Activated T-helper 1 cell treated with anti-CD3 and anti-CD28 coated beads, Interleukin-12 subunit alpha, Interleukin-12 subunit beta, Interleukin-2, Interleukin-4 antibody, amounts not matched to agents 30 ng/mL and 10 ng/mL and 1 ng/mL, durations not matched to agents 14 hours and 24 hours and 36 hours (primary cell): ENCODE measurements at regions of chr3 and their contacts with region 1.

Region 1: GRCh38 chr3:98329392-98330124 is 24.1 kb upstream of the OR5K4 start:
- DNase-seq: peak; percentile 28
- H3K4me3 Mint-ChIP-seq: no peak overlapping the region
- H3K27ac Mint-ChIP-seq: no peak overlapping the region
- H3K4me1 Mint-ChIP-seq: peaks cover 24% of the 10 kb centered on the region
- H3K27me3 Mint-ChIP-seq: peaks cover 32% of the 10 kb centered on the region

Region 2: GRCh38 chr3:97793420-97794019 is 536.0 kb before region 1 on chr3:
- intact Hi-C with region 1: loop called (anchors 10 kb)
- DNase-seq: peak; percentile 6
- H3K4me3 Mint-ChIP-seq: no peak overlapping the region
- H3K27ac Mint-ChIP-seq: no peak overlapping the region
- H3K4me1 Mint-ChIP-seq: no peaks in the 10 kb centered on the region
- H3K27me3 Mint-ChIP-seq: no peaks in the 10 kb centered on the region

Region 3: DNA sequence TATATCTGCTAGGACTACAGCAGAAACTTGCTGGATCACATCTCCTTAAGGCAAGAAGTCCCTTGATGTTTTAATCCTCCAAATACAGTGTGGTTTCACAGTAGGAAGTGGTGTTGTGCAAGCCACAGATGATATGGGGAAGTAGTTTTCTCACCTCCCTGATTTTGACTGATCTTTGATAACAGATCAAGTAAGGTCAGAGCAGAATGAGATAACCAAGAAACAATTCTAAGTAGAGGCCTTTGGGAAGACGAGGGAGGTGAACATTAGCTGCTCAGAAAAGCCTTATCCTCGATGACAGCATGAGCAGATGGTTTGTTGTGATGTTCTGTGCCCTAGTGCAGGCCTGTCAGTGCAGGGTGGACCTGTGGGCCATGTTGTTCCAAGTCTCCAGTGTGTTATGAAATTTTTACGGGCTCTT is 418.6 kb before region 1 on chr3:
- intact Hi-C with region 1: no loop called
- DNase-seq: peak; percentile 7
- H3K4me3 Mint-ChIP-seq: peak overlapping the region; percentile 78
- H3K27ac Mint-ChIP-seq: peak overlapping the region; percentile 61
- H3K4me1 Mint-ChIP-seq: peaks cover 21% of the 10 kb centered on the region
- H3K27me3 Mint-ChIP-seq: no peaks in the 10 kb centered on the region

Region 4: GRCh38 chr3:98188545-98188944 is 141.0 kb before region 1 on chr3:
- intact Hi-C with region 1: loop called (anchors 1 kb)
- DNase-seq: no peak
- H3K4me3 Mint-ChIP-seq: no peak overlapping the region
- H3K27ac Mint-ChIP-seq: no peak overlapping the region
- H3K4me1 Mint-ChIP-seq: peaks cover 6% of the 10 kb centered on the region
- H3K27me3 Mint-ChIP-seq: peaks cover 2% of the 10 kb centered on the region

Region 5: GRCh38 chr3:98282205-98282604 is 47.4 kb before region 1 on chr3 and contains the start of gene OR5H2:
- intact Hi-C with region 1: no loop called
- DNase-seq: no peak
- H3K4me3 Mint-ChIP-seq: no peak within 1 kb of the TSS
- H3K27ac Mint-ChIP-seq: no peak within 1 kb of the TSS
- H3K4me1 Mint-ChIP-seq: peaks cover 8% of the 10 kb centered on the region
- H3K27me3 Mint-ChIP-seq: peaks cover 8% of the 10 kb centered on the region
- total RNA-seq, gene OR5H2: not detected in 2 replicates

Region 6: DNA sequence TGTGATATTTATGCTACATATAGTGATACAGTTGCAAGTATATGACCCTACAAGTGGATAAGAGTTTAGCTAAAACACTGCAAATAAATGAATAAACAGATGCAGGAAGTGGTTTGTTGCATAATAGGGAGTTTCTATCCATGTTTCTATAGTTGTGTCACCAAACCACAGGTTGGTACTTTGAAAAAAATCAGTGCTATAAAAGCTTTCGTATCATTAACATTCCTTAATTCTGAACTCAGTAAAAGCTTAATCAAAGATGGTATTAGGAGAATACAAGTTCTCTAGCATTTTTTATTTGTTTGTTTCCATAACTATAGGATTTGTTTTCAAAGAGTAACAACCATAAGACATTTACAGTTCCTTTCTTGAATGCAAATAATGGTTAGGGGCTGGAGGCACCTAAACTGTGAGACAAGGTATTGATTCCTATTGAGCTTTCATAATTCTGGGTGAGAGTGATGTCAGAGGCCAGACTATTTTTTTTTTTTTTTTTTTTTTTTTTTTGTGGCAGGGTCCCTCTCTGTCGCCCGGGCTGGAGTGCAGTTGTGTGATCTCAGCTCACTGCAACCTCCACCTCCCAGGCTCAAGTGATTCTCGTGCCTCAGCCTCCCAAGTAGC is 234.2 kb after region 1 on chr3:
- intact Hi-C with region 1: loop called (anchors 5 kb)
- DNase-seq: no peak
- H3K4me3 Mint-ChIP-seq: peak overlapping the region; percentile 47
- H3K27ac Mint-ChIP-seq: peak overlapping the region; percentile 53
- H3K4me1 Mint-ChIP-seq: peaks cover 94% of the 10 kb centered on the region
- H3K27me3 Mint-ChIP-seq: no peaks in the 10 kb centered on the region